ENCODE measurements at regions of chr18 and their contacts with region 1.

Region 1: DNA sequence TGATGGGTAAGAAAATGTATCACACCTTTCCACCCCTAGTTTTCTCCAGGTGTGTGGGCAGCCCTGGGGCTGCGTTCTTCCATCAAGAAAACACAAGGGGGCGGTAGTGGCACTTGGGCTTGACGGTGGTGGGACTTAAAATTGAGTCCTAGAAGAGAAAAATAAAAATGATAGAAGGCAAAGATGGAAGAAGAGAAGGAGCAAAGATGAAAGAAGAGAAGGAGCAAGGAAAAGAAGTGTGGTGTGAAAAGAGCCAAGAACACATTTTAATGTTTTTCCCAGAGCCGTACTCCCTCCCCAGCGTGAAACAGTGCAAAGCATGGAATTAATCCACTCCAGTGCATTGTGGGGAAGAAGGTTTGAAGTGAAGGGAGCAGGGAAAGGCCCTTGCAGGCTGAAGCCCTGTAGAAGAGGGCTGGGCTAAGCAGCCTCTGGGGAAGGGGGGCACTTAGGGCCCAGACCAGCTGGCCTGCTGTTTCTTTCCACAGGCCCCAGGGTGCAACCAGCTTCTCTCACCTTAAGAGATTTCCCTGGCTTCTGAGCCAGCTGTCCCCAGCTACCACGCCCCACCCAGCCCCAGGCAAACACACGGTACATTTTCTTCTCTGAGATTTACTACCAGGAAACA is 256.8 kb downstream of the RNF152 start:
- DNase-seq: peak; percentile 66
- H3K4me3 ChIP-seq: no peak overlapping the region; a peak in 1 of 4 replicates
- H3K27ac ChIP-seq: peak overlapping the region in 1 of 2 experiments; percentile 53; a peak in 2 of 4 replicates
- H3K4me1 ChIP-seq: peaks cover 9 to 11% of the 10 kb centered on the region in 2 experiments; a peak in 2 of 4 replicates
- H3K27me3 ChIP-seq: no peaks in the 10 kb centered on the region
- CTCF ChIP-seq: peak; percentile 95
- EP300 ChIP-seq: 0 out of 4 replicates have a peak, but pooled peaks of 1 of the 2 experiments have one; percentile 4
- RAD21 ChIP-seq: peak; percentile 87

Region 2: GRCh38 chr18:61854578-61855448 is 218.8 kb after region 1 on chr18:
- CTCF ChIA-PET with region 1: interaction called, 13 read pairs
- POLR2A ChIA-PET with region 1: no interaction called
- DNase-seq: peak; percentile 69
- H3K4me3 ChIP-seq: peak overlapping the region in 1 of 2 experiments; percentile 6; a peak in 1 of 4 replicates
- H3K27ac ChIP-seq: peak overlapping the region; percentile 83 to 95
- H3K4me1 ChIP-seq: peaks cover 33 to 66% of the 10 kb centered on the region in 2 experiments
- H3K27me3 ChIP-seq: no peaks in the 10 kb centered on the region
- CTCF ChIP-seq: no peak
- EP300 ChIP-seq: peak; percentile 22 to 93; a peak in 3 of 4 replicates
- RAD21 ChIP-seq: no peak; the same call in none of the 2 replicates

Region 3: GRCh38 chr18:61893971-61894750 is 258.1 kb after region 1 on chr18:
- CTCF ChIA-PET with region 1: interaction called, 24 read pairs
- POLR2A ChIA-PET with region 1: interaction called, 7 read pairs
- DNase-seq: peak; percentile 97
- H3K4me3 ChIP-seq: peak overlapping the region; percentile 91 to 95
- H3K27ac ChIP-seq: peak overlapping the region; percentile 27 to 85; a peak in 3 of 4 replicates
- H3K4me1 ChIP-seq: peaks cover 5 to 22% of the 10 kb centered on the region in 2 experiments; a peak in 3 of 4 replicates
- H3K27me3 ChIP-seq: no peaks in the 10 kb centered on the region
- CTCF ChIP-seq: no peak
- EP300 ChIP-seq: no peak
- RAD21 ChIP-seq: peak; percentile 70

Region 4: DNA sequence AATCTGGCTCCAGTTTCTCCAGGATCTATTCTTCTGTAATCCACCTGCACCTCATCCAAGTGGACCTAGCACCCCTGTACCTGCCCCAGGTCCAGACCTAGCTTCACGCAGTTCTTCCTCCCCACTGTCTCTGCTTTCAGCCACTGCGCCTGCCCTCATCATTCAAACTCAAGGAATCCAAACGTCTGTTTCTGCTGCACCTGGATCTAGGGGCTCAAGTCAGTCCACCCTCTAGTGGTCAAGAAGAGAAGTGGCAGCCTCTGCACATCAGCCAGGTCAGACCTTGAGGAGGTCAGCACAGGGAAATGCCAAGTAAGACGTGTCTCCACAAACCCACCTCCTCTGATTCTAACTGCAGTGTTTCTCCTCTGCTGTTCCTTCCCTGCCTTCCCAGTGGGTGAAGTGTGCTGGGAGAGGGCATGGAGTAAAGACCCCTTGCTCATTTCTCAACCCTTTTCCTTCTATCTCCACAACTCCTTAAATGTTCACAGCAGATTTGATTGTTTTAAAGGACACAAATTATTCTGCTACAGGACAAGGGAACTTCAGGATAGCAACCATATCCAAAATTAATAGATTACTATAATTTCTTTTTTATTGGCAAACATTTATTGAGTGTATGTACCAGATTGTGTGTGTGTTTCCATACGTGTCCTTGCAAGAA is 265.4 kb after region 1 on chr18:
- CTCF ChIA-PET with region 1: interaction called, 24 read pairs
- POLR2A ChIA-PET with region 1: no interaction called
- DNase-seq: peak; percentile 73
- H3K4me3 ChIP-seq: no peak overlapping the region; a peak in 1 of 4 replicates
- H3K27ac ChIP-seq: no peak overlapping the region
- H3K4me1 ChIP-seq: peaks cover 0 to 7% of the 10 kb centered on the region in 2 experiments; a peak in 2 of 4 replicates
- H3K27me3 ChIP-seq: no peaks in the 10 kb centered on the region
- CTCF ChIP-seq: peak; percentile 89
- EP300 ChIP-seq: no peak
- RAD21 ChIP-seq: peak; percentile 82

Measured in SK-N-SH (cell line).